ENCODE measurements at regions of chr20 and their contacts with region 1.

Region 1: DNA sequence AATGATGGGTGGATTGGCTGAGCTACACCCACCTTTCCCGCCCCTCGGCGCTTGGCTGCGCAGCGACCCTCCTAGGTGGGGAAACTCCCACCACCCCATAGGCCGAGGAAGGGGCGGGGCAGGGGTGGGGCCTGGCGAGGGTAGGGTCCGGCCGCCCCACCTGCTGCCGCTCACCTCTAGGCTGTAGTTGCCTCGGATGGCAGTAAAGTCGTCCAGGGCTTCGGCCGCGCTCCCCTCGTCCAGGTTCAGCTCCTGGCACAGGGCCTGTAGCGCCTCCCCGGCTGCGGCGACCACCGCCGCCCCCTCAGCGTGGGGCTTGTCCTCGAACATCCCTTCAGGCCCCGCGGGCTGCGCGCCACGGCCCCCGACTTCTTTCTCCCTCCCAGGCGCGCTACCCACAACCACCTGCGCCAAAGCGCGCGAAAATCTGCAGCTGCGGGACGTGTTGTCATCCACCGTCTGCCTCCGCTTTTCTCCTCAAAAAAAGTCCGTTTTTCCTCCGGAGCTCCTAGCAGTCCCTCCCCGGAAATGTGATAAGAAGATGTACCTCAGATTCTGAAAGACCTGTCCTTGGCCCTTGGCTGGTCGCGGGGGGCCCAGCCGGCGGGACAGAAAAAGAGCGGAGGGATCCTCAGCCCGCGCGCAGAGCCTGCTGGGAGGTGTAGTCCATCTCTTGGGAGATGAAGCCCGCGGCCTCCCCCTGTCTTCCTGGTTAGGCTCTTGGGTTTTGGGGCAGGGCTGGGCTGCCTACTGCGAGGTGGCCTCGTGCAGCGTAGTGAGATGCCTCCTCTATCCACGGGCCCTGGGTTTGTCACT is at the start of gene RBL1:
- DNase-seq: peak; percentile 57
- ATAC-seq: peak; percentile 93
- H3K4me3 ChIP-seq: peak within 1 kb of the TSS; percentile 67 to 93
- H3K27ac ChIP-seq: peak within 1 kb of the TSS; percentile 92
- H3K4me1 ChIP-seq: peaks cover 5% of the 10 kb centered on the region
- H3K27me3 ChIP-seq: no peaks in the 10 kb centered on the region
- CTCF ChIP-seq: no peak
- total RNA-seq, gene RBL1: 14.0 TPM

Region 2: GRCh38 chr20:36754656-36755222 is 341.1 kb before region 1 on chr20:
- CTCF ChIA-PET with region 1: no interaction called
- POLR2A ChIA-PET with region 1: interaction called, 10 read pairs
- in situ Hi-C with region 1: no loop called
- intact Hi-C with region 1: no loop called
- DNase-seq: peak; percentile 78
- ATAC-seq: peak; percentile 92
- H3K4me3 ChIP-seq: no peak overlapping the region
- H3K27ac ChIP-seq: no peak overlapping the region
- H3K4me1 ChIP-seq: no peaks in the 10 kb centered on the region
- H3K27me3 ChIP-seq: no peaks in the 10 kb centered on the region
- CTCF ChIP-seq: peak; percentile 84

Region 3: GRCh38 chr20:37071481-37071911 is 24.3 kb before region 1 on chr20:
- CTCF ChIA-PET with region 1: no interaction called
- POLR2A ChIA-PET with region 1: interaction called, 13 read pairs
- in situ Hi-C with region 1: no loop called
- intact Hi-C with region 1: no loop called
- DNase-seq: no peak
- ATAC-seq: no peak
- H3K4me3 ChIP-seq: no peak overlapping the region
- H3K27ac ChIP-seq: no peak overlapping the region
- H3K4me1 ChIP-seq: no peaks in the 10 kb centered on the region
- H3K27me3 ChIP-seq: no peaks in the 10 kb centered on the region
- CTCF ChIP-seq: no peak

Measured in Panc1 (cell line).